ENCODE measurements at regions of chrX and their contacts with region 1.

Region 1: GRCh38 chrX:16357902-16358301 is 190.6 kb downstream of the MAGEB17 start:
- DNase-seq: no peak
- H3K4me3 ChIP-seq: no peak overlapping the region
- H3K27ac ChIP-seq: no peak overlapping the region
- H3K4me1 ChIP-seq: no peaks in the 10 kb centered on the region
- H3K27me3 ChIP-seq: no peaks in the 10 kb centered on the region
- CTCF ChIP-seq: no peak

Region 2: GRCh38 chrX:16160729-16161128 is 197.2 kb before region 1 on chrX:
- CTCF ChIA-PET with region 1: interaction called, 10 read pairs
- POLR2A ChIA-PET with region 1: no interaction called
- intact Hi-C with region 1: no loop called
- DNase-seq: peak; percentile 29 to 58
- H3K4me3 ChIP-seq: no peak overlapping the region
- H3K27ac ChIP-seq: peak overlapping the region; percentile 43; the same call in 1 of the 2 replicates
- H3K4me1 ChIP-seq: peaks cover 13% of the 10 kb centered on the region
- H3K27me3 ChIP-seq: no peaks in the 10 kb centered on the region
- CTCF ChIP-seq: no peak

Measured in PC-9 (cell line).